Activated B cell treated with CpG ODN at 0.5 μM for 24 hours (primary cell): ENCODE measurements at regions of chr9 and their contacts with region 1.

Region 1: GRCh38 chr9:79651251-79651795 is 79.6 kb downstream of the TLE4 start:
- DNase-seq: no peak
- ATAC-seq: no peak
- H3K4me3 Mint-ChIP-seq: no peak overlapping the region
- H3K27ac Mint-ChIP-seq: no peak overlapping the region
- H3K4me1 Mint-ChIP-seq: peaks cover 13% of the 10 kb centered on the region
- H3K27me3 Mint-ChIP-seq: no peaks in the 10 kb centered on the region
- CTCF ChIP-seq: no peak

Region 2: DNA sequence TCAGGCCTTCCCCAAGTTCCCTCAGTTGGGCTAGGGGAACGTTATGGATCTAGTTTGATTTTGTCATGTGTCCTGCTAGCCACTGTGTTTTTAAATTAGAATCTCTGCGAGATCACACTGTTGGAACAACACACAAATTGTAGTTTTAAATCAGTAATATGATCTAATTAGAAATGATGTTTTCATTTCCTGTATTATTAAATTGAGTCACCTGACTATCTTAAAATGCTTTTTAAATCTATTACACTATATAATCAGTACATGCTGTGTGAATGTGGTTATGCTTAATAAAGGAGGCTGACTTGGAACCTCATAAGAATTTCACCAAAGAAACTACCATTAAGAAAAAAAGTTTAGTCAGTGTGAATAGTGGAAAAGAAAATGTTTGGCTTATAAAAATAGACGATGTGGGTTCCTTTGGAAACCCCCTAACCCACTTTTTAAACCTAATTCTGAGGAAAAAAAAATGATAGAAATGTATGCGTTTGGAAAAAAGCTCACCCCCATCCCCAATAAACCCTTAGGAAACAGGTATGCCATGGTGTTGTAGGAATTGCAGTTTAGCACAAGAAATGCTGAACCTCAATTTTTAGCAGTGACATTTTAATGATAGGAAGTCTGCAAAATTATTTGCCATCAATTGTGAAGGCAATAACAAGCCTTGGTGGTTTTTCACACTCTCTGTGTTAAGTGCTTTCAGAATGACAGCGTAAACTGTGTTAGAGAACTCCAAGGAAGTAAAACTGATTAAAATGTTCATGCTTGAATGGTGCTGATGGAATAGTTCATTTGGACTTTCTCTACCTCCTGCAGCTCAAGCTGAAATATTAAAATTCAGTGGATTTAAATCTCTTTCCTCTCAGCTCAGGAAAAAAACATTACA is 20.6 kb before region 1 on chr9:
- CTCF ChIA-PET with region 1: no interaction called
- POLR2A ChIA-PET with region 1: no interaction called
- intact Hi-C with region 1: loop called (anchors 2 kb)
- DNase-seq: no peak
- ATAC-seq: no peak
- H3K4me3 Mint-ChIP-seq: no peak overlapping the region
- H3K27ac Mint-ChIP-seq: no peak overlapping the region
- H3K4me1 Mint-ChIP-seq: peaks cover 19% of the 10 kb centered on the region
- H3K27me3 Mint-ChIP-seq: no peaks in the 10 kb centered on the region
- CTCF ChIP-seq: no peak

Region 3: GRCh38 chr9:79694676-79695400 is 43.5 kb after region 1 on chr9:
- CTCF ChIA-PET with region 1: no interaction called
- POLR2A ChIA-PET with region 1: no interaction called
- intact Hi-C with region 1: no loop called
- DNase-seq: no peak
- ATAC-seq: no peak
- H3K4me3 Mint-ChIP-seq: no peak overlapping the region
- H3K27ac Mint-ChIP-seq: no peak overlapping the region
- H3K4me1 Mint-ChIP-seq: peaks cover 22% of the 10 kb centered on the region
- H3K27me3 Mint-ChIP-seq: no peaks in the 10 kb centered on the region
- CTCF ChIP-seq: no peak